Activated CD8-positive, alpha-beta T cell treated with anti-CD3 and anti-CD28 coated beads for 36 hours (primary cell): ENCODE measurements at regions of chr1 and their contacts with region 1.

Region 1: DNA sequence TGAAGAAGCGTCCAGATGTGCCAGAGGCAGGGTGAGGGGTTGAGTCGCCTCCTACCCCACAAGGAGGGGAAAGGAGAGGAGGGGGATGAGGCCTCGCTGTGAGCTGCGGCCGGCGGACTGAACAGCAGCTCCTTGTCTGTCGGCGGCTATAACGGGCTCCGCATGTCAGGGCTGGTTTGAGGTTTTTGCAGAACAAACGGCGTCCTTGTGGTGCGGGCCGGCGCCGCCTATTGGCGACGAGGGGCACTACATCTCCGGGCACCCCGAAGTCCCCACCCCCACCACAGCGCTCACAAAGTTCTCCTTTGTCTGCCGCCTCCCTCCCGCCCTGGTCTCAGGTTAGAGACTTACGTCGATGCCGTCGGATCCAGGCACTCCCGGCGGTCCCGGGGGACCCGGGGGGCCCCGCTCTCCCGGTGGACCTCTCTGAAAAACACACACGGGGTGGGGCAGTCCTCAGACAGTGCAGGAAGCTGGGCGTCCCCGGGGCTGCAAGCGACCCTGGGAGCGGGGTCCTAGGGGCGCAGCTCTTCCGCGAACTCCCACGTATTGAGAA is 1.8 kb downstream of the COL9A2 start:
- DNase-seq: peak; percentile 92
- ATAC-seq: peak; percentile 82
- H3K4me3 Mint-ChIP-seq: peak overlapping the region; percentile 79
- H3K27ac Mint-ChIP-seq: no peak overlapping the region
- H3K4me1 Mint-ChIP-seq: peaks cover 31% of the 10 kb centered on the region
- H3K27me3 Mint-ChIP-seq: peaks cover 9% of the 10 kb centered on the region
- CTCF ChIP-seq: peak; percentile 93

Region 2: DNA sequence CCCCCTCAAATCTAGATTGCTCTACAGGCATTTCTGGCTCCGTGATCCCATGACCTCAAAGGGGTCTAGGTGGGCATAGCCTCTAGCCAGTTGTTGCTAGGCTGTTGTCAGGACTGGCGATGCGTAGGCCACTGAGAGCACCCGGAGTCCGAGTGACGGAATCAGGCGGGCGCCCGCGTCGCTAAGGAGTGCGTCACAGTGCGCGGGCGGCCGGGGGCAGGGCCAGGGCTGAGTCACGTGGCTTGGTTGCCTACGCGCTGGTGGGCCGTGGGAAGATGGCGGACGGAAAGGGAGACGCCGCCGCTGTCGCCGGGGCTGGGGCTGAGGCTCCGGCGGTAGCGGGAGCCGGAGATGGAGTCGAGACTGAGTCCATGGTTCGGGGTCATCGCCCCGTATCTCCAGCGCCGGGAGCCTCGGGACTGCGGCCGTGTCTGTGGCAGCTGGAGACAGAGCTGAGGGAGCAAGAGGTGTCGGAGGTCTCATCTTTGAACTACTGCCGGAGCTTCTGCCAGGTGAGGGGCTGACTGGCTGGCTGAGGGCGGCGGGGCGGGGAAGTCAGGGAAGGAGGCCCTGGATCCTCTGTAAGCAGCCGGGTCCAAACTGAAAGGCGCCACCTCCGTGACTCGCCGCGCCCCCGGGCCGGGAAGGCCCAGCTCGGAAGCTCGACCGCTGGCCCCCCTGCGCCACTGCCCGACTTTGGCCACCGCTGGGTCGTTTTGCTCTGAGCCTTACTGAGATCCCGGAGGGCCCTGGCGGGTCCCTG is 154.0 kb before region 1 on chr1 and contains the start of gene RLF:
- CTCF ChIA-PET with region 1: interaction called, 19 read pairs
- POLR2A ChIA-PET with region 1: interaction called, 5 read pairs
- intact Hi-C with region 1: loop called (anchors 10 kb)
- DNase-seq: peak; percentile 97
- ATAC-seq: peak; percentile 90
- H3K4me3 Mint-ChIP-seq: no peak within 1 kb of the TSS
- H3K27ac Mint-ChIP-seq: no peak within 1 kb of the TSS
- H3K4me1 Mint-ChIP-seq: peaks cover 5% of the 10 kb centered on the region
- H3K27me3 Mint-ChIP-seq: no peaks in the 10 kb centered on the region
- CTCF ChIP-seq: no peak
- total RNA-seq, gene RLF: 21.2 to 21.3 TPM

Region 3: GRCh38 chr1:40241362-40241761 is 74.0 kb before region 1 on chr1:
- CTCF ChIA-PET with region 1: interaction called, 17 read pairs
- POLR2A ChIA-PET with region 1: interaction called, 4 read pairs
- intact Hi-C with region 1: no loop called
- DNase-seq: no peak
- ATAC-seq: peak; percentile 31
- H3K4me3 Mint-ChIP-seq: no peak overlapping the region
- H3K27ac Mint-ChIP-seq: peak overlapping the region; percentile 87
- H3K4me1 Mint-ChIP-seq: peaks cover 39% of the 10 kb centered on the region
- H3K27me3 Mint-ChIP-seq: no peaks in the 10 kb centered on the region
- CTCF ChIP-seq: no peak

Region 4: DNA sequence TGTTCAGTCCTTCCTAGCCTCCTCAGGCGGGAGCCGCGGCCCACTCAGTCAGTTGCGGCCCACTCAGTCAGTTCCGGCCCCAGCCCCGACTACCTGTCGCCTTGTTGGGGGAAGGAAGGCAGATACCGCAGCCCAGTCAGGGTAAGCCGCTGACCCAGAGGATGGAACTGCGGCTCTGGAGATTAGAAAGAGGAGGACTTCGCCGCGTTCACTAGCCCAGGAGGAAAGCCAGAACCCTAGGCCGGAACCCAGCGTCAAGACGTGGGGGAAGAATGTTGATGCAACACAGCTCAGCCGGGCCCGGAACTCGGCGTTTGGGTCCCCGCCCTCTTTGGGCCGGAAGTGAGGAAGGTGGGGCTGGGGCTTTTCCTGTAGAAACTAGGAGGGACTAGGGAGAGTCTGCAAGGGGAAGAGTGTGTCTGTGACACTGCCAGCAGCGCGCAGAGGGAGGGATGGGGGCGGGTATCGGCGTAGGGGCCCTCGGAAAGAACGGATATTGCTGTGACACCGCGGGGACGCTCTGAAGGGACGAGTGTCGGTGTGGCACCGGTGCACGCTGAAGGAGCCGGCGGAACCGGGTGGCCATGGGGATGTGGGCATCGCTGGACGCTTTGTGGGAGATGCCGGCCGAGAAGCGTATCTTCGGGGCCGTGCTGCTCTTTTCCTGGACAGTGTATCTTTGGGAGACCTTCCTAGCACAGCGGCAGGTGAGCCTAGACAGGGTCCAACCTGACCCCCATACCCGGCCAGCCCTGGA is 57.5 kb before region 1 on chr1 and contains the start of gene ZMPSTE24:
- CTCF ChIA-PET with region 1: interaction called, 8 read pairs
- POLR2A ChIA-PET with region 1: interaction called, 11 read pairs
- intact Hi-C with region 1: no loop called
- DNase-seq: peak; percentile 98
- ATAC-seq: peak; percentile 97
- H3K4me3 Mint-ChIP-seq: peak within 1 kb of the TSS; percentile 94
- H3K27ac Mint-ChIP-seq: peak within 1 kb of the TSS; percentile 98
- H3K4me1 Mint-ChIP-seq: peaks cover 48% of the 10 kb centered on the region
- H3K27me3 Mint-ChIP-seq: no peaks in the 10 kb centered on the region
- CTCF ChIP-seq: no peak
- total RNA-seq, gene ZMPSTE24: 20.1 to 21.2 TPM

Region 5: GRCh38 chr1:40281853-40282252 is 33.5 kb before region 1 on chr1:
- CTCF ChIA-PET with region 1: interaction called, 16 read pairs
- POLR2A ChIA-PET with region 1: interaction called, 3 read pairs
- intact Hi-C with region 1: no loop called
- DNase-seq: no peak
- ATAC-seq: no peak
- H3K4me3 Mint-ChIP-seq: no peak overlapping the region
- H3K27ac Mint-ChIP-seq: no peak overlapping the region
- H3K4me1 Mint-ChIP-seq: no peaks in the 10 kb centered on the region
- H3K27me3 Mint-ChIP-seq: no peaks in the 10 kb centered on the region
- CTCF ChIP-seq: no peak

Region 6: GRCh38 chr1:40462956-40463590 is 147.8 kb after region 1 on chr1:
- CTCF ChIA-PET with region 1: no interaction called
- POLR2A ChIA-PET with region 1: no interaction called
- intact Hi-C with region 1: no loop called
- DNase-seq: no peak
- ATAC-seq: no peak
- H3K4me3 Mint-ChIP-seq: no peak overlapping the region
- H3K27ac Mint-ChIP-seq: no peak overlapping the region
- H3K4me1 Mint-ChIP-seq: no peaks in the 10 kb centered on the region
- H3K27me3 Mint-ChIP-seq: no peaks in the 10 kb centered on the region
- CTCF ChIP-seq: no peak